B cell (primary cell): ENCODE measurements at regions of chr3 and their contacts with region 1.

Region 1: GRCh38 chr3:31946484-31947081 is 34.5 kb downstream of the OSBPL10 start:
- DNase-seq: peak; percentile 65
- ATAC-seq: peak; percentile 34
- H3K4me3 ChIP-seq: peak overlapping the region in 1 of 5 experiments; percentile 7
- H3K4me3 Mint-ChIP-seq: peak overlapping the region; percentile 82
- H3K27ac ChIP-seq: peak overlapping the region; percentile 83 to 93
- H3K27ac Mint-ChIP-seq: peak overlapping the region; percentile 98
- H3K4me1 ChIP-seq: peaks cover 84 to 85% of the 10 kb centered on the region in 2 donors
- H3K4me1 Mint-ChIP-seq: peaks cover 82% of the 10 kb centered on the region
- H3K27me3 ChIP-seq: no peaks in the 10 kb centered on the region
- H3K27me3 Mint-ChIP-seq: no peaks in the 10 kb centered on the region
- CTCF ChIP-seq: no peak

Region 2: GRCh38 chr3:31934018-31934417 is 12.6 kb before region 1 on chr3:
- CTCF ChIA-PET with region 1: interaction called, 4 read pairs
- POLR2A ChIA-PET with region 1: interaction called, 8 read pairs
- intact Hi-C with region 1: loop called (anchors 2 kb)
- DNase-seq: no peak
- ATAC-seq: peak; percentile 28
- H3K4me3 ChIP-seq: no peak overlapping the region
- H3K4me3 Mint-ChIP-seq: peak overlapping the region; percentile 40
- H3K27ac ChIP-seq: peak overlapping the region in 1 of 2 donors; percentile 67
- H3K27ac Mint-ChIP-seq: peak overlapping the region; percentile 77
- H3K4me1 ChIP-seq: peaks cover 60 to 75% of the 10 kb centered on the region in 2 donors
- H3K4me1 Mint-ChIP-seq: peaks cover 47% of the 10 kb centered on the region
- H3K27me3 ChIP-seq: no peaks in the 10 kb centered on the region
- H3K27me3 Mint-ChIP-seq: no peaks in the 10 kb centered on the region
- CTCF ChIP-seq: no peak

Region 3: DNA sequence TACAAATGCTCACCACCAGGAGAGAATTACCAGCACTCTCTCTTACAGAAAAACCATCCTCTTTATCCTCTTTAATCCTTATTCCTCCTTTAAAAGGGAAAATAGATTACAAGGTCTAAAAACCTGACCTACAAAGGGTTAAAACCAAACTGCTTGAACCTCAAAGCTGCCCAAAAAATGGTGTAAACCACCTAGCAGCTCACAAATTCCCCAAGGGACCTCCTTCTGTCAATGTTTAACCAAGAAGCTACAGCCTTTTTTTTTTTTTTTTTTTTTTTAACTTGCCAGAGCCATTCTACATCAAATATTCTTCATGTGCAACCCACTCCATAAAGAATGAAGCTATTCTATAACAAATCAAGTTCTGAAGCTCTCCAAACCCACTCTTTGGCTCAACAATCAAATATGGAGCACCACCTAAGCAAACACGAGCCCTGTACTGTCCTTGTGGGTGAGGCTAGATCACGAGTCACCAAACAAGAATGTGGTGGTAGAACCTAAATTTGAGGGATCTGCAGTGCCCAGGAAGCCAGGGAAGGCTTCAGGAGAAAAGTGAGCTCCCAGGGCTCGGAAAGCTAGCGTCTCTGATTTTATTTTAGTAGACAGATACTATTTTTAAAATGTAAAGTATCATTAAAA is 14.3 kb after region 1 on chr3:
- CTCF ChIA-PET with region 1: interaction called, 19 read pairs
- POLR2A ChIA-PET with region 1: interaction called, 4 read pairs
- intact Hi-C with region 1: loop called (anchors 2 kb)
- DNase-seq: peak; percentile 71
- ATAC-seq: peak; percentile 65
- H3K4me3 ChIP-seq: peak overlapping the region in 3 of 5 experiments; percentile 34 to 60 (median 36)
- H3K4me3 Mint-ChIP-seq: peak overlapping the region; percentile 89
- H3K27ac ChIP-seq: peak overlapping the region; percentile 56 to 88
- H3K27ac Mint-ChIP-seq: peak overlapping the region; percentile 95
- H3K4me1 ChIP-seq: peaks cover 76 to 84% of the 10 kb centered on the region in 2 donors
- H3K4me1 Mint-ChIP-seq: peaks cover 77% of the 10 kb centered on the region
- H3K27me3 ChIP-seq: no peaks in the 10 kb centered on the region
- H3K27me3 Mint-ChIP-seq: no peaks in the 10 kb centered on the region
- CTCF ChIP-seq: no peak